PC-3 (cell line): ENCODE measurements at regions of chr7 and their contacts with region 1.

Region 1: GRCh38 chr7:101373389-101373788 is 10.7 kb downstream of the COL26A1 start:
- DNase-seq: no peak
- ATAC-seq: no peak
- H3K4me3 ChIP-seq: no peak overlapping the region
- H3K27ac ChIP-seq: no peak overlapping the region
- H3K4me1 ChIP-seq: no peaks in the 10 kb centered on the region
- H3K27me3 ChIP-seq: 0 out of 2 replicates have a peak, but pooled peaks cover 5% of the 10 kb centered on the region
- CTCF ChIP-seq: no peak

Region 2: DNA sequence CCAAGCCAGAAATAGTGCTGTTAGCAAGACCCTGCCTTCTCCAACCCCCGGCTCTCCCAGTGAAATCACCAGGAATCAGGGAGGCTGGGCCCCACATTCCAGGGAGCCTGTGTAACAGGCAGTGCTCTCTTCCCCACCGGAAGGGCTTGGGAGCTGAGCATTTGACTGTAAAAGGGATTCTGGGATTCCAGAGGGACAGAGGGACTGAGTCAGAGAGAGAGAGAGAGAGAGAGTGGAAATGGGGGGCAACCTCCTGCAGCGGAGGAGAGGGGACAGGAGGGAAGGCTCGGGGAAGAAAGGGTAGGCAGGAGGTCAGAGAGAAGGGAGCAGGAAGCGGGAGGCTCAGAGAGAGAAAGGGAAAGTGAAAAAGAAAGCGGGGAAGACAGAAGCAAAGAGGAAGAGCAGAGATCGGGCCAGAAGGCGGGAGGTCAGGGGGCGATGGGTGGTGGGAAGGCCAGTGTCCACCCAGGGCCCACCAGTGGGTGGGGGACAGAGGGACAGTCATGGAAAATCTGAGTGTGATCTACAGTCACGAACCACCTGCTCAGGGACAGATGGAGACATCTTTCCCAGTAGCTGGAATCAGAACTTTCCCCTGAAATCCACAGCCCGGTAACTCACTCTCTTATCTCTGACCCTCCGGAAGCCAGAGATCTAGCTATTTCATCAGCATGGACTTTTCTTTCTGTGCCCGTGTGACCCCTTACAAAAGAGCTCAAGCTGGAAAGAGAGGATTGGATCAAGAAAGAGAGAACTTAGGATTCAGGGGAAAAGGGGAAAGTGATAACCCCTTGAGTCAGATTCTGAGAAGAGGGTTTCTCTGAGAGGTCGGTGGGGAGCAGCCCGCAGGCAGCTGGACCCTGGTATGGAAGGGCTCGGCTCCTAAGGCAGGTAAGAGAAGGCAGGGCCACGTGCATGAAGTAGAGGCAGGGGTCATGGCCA is 251.1 kb before region 1 on chr7:
- CTCF ChIA-PET with region 1: no interaction called
- POLR2A ChIA-PET with region 1: no interaction called
- intact Hi-C with region 1: no loop called
- DNase-seq: peak; percentile 87
- ATAC-seq: peak; percentile 69
- H3K4me3 ChIP-seq: peak overlapping the region; percentile 53; the same call in 1 of the 2 replicates
- H3K27ac ChIP-seq: peak overlapping the region; percentile 76
- H3K4me1 ChIP-seq: peaks cover 41% of the 10 kb centered on the region
- H3K27me3 ChIP-seq: no peaks in the 10 kb centered on the region
- CTCF ChIP-seq: no peak

Region 3: DNA sequence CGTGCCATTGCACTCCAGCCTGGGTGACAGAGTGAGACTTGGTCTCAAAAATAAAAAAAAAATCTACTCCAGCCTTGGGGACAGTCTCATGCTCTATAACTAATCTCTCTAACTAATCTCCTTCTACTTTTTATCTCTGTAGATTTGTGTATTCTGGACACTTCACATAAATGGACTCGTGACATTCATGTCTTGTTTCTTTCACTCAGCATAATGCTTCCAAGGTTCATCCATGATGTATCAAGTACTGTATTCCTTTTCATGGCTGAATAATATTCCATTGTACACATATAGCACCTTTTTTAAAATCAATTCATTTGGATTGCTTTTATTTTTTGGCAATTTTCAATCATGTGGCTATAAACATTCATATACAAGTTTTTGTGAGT is 20.5 kb before region 1 on chr7:
- CTCF ChIA-PET with region 1: no interaction called
- POLR2A ChIA-PET with region 1: interaction called, 13 read pairs
- intact Hi-C with region 1: no loop called
- DNase-seq: no peak
- ATAC-seq: no peak
- H3K4me3 ChIP-seq: no peak overlapping the region
- H3K27ac ChIP-seq: no peak overlapping the region
- H3K4me1 ChIP-seq: peaks cover 7% of the 10 kb centered on the region; the same call in 1 of the 2 replicates
- H3K27me3 ChIP-seq: no peaks in the 10 kb centered on the region
- CTCF ChIP-seq: no peak

Region 4: DNA sequence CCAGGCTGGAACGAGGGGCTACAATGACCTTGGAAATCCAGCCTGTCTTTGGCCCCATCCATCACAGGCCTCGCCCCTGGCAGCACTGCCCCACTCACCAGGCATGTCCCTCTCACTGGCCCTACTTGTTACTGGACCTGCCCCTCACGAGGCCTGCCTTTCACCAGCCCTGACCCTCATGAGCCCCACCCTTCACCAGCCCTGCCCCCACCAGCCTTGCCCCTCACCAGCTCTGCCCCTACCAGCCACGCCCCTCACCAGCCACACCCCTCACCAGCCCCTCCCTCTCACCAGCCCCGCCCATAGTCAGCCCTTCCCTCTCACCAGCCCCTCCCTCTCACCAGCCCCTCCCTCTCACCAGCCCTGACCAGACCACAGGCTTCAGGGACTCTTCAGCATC is 47.0 kb after region 1 on chr7:
- CTCF ChIA-PET with region 1: no interaction called
- POLR2A ChIA-PET with region 1: no interaction called
- intact Hi-C with region 1: no loop called
- DNase-seq: peak; percentile 15
- ATAC-seq: no peak; the same call in 1 of the 2 replicates
- H3K4me3 ChIP-seq: no peak overlapping the region
- H3K27ac ChIP-seq: no peak overlapping the region
- H3K4me1 ChIP-seq: no peaks in the 10 kb centered on the region
- H3K27me3 ChIP-seq: 0 out of 2 replicates have a peak, but pooled peaks cover 3% of the 10 kb centered on the region
- CTCF ChIP-seq: no peak

Region 5: DNA sequence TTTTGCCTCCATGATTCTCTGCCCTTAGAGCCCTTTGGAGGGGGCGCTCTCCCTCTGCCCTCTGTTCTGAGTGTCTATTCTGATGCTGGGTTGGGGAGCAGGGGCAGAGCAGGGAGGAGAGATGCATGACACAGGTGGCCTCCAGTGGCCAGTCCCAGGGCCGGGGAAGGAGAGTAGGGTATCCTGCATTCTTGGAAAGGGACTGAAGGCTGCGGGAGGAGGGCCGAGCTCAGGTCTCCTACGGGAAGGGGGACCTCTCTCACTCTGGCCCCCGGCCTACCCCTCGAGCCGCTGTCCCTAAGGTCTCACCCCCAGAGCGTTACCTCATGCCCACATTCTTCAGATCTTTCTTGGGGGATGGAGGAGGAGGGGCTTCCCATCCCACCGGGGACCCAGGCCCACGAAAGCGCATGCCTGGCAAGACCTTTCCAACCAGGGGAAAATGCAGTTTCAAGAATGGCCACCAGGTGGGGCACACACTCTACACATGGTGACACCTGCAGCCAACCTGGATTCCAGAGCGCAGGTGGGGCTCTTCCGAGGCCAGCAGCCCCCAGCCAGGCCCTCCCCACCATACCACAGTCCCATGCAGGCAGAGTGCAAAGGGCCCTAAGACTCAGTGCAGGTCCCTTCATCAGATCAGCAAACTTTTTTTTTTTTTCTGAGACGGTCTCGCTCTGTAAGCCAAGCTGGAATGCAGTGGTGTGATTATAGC is 169.3 kb after region 1 on chr7:
- CTCF ChIA-PET with region 1: no interaction called
- POLR2A ChIA-PET with region 1: no interaction called
- intact Hi-C with region 1: no loop called
- DNase-seq: peak; percentile 75
- ATAC-seq: peak; percentile 62
- H3K4me3 ChIP-seq: no peak overlapping the region
- H3K27ac ChIP-seq: no peak overlapping the region
- H3K4me1 ChIP-seq: no peaks in the 10 kb centered on the region
- H3K27me3 ChIP-seq: no peaks in the 10 kb centered on the region
- CTCF ChIP-seq: peak; percentile 88

Region 6: DNA sequence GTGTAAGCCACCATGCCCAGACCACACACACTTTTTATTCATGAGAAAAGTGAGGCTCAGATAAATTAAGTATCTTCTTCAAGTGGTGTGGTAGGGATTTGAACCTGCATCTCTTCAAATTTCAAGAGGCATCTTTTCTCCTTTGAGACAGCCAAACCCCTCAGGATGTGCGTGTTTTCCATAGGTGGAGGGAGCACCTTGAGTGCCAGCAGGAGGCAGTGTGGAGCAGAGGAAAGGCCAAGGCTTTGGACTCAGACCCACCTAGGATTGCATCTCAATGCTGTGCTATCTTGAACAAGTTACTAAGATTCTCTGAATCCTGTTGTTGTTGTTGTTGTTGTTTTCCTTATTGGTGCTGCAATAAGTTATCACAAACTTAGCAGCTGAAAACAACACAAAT is 295.9 kb after region 1 on chr7:
- CTCF ChIA-PET with region 1: no interaction called
- POLR2A ChIA-PET with region 1: no interaction called
- intact Hi-C with region 1: no loop called
- DNase-seq: peak; percentile 19
- ATAC-seq: no peak; the same call in 1 of the 2 replicates
- H3K4me3 ChIP-seq: no peak overlapping the region
- H3K27ac ChIP-seq: no peak overlapping the region
- H3K4me1 ChIP-seq: no peaks in the 10 kb centered on the region
- H3K27me3 ChIP-seq: no peaks in the 10 kb centered on the region
- CTCF ChIP-seq: peak; percentile 58